Thyroid gland (tissue), 4 donors: ENCODE measurements at regions of chr10 and their contacts with region 1.

Region 1: GRCh38 chr10:6108603-6109443 is 20.0 kb downstream of the RBM17 start:
- DNase-seq: peak in 1 of 2 donors; percentile 37
- H3K4me3 ChIP-seq: no peak overlapping the region
- H3K27ac ChIP-seq: no peak overlapping the region
- H3K4me1 ChIP-seq: no peaks in the 10 kb centered on the region
- H3K27me3 ChIP-seq: no peaks in the 10 kb centered on the region
- CTCF ChIP-seq: peak; percentile 54 to 84 (median 68)
- POLR2A ChIP-seq: no peak

Region 2: DNA sequence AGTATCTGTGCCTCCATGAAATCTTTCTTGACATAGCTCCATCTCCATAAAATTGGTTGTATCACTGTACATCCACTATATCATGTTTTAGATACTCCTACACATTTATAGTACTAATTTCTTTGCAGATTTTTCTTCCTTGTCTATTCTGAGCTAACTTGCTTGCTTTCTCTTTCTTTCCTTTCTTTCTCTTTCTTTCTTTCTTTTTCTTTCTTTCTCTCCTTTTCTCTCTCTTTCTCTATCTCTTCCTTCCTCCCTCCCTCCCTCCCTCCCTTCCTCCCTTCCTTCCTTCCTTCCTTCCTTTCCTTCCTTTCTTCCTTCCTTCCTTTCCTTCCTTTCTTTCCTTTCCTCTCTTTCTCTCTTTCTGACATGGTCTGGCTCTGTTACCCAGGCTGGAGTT is 400.5 kb before region 1 on chr10:
- intact Hi-C with region 1: no loop called
- DNase-seq: no peak
- H3K4me3 ChIP-seq: no peak overlapping the region
- H3K27ac ChIP-seq: peak overlapping the region in 1 of 3 donors; percentile 58
- H3K4me1 ChIP-seq: peaks cover 23 to 32% of the 10 kb centered on the region in 2 donors
- H3K27me3 ChIP-seq: no peaks in the 10 kb centered on the region
- CTCF ChIP-seq: no peak
- POLR2A ChIP-seq: no peak

Region 3: GRCh38 chr10:6151087-6151977 is 42.5 kb after region 1 on chr10:
- intact Hi-C with region 1: loop called (anchors 2 kb)
- DNase-seq: peak; percentile 65 to 67
- H3K4me3 ChIP-seq: no peak overlapping the region
- H3K27ac ChIP-seq: no peak overlapping the region
- H3K4me1 ChIP-seq: peaks cover 0 to 12% of the 10 kb centered on the region in 2 donors
- H3K27me3 ChIP-seq: no peaks in the 10 kb centered on the region
- CTCF ChIP-seq: peak in 5 of 6 experiments; percentile 51 to 73 (median 55)
- POLR2A ChIP-seq: no peak

Region 4: DNA sequence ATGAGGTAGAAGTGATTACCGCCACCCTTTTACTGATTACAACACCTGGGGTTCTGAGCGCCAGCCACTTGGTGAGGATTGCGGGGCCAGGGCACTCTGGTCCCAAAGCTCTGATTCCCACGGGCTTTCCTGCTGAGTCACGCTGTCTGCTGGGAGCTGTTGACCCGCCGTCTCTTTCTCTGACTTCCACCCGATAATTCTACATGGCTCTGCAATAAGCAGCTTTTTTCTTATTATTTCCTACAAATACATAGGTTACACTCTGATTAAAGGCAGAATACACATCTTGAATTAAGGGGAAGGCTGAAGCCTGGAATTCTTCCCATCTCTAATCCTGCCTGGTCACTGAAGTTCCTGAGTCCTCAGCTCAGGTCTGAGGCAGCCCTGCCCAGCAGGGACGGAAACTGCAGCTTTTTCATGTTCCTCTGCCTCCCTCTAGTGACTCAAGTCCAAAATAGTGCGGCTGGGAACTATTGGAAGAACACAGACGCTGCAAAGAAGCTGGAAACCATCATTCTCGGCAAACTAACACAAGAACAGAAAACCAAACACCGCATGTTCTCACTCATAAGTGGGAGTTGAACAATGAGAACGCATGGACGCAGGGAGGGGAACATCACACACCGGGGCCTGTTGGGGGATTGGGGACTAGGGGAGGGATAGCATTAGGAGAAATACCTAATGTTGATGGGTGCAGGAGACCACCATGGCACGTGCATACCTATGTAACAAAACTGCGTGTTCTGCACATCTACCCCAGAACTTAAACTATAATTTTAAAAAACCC is 292.9 kb after region 1 on chr10:
- intact Hi-C with region 1: loop called (anchors 5 kb)
- DNase-seq: peak; percentile 78 to 83
- H3K4me3 ChIP-seq: peak overlapping the region in 1 of 3 donors; percentile 4
- H3K27ac ChIP-seq: peak overlapping the region in 2 of 3 donors; percentile 36 to 52
- H3K4me1 ChIP-seq: peaks cover 5 to 18% of the 10 kb centered on the region in 2 donors
- H3K27me3 ChIP-seq: no peaks in the 10 kb centered on the region
- CTCF ChIP-seq: peak; percentile 34 to 96 (median 80)
- POLR2A ChIP-seq: no peak